IMR-90 (cell line): ENCODE measurements at regions of chr11 and their contacts with region 1.

Region 1: DNA sequence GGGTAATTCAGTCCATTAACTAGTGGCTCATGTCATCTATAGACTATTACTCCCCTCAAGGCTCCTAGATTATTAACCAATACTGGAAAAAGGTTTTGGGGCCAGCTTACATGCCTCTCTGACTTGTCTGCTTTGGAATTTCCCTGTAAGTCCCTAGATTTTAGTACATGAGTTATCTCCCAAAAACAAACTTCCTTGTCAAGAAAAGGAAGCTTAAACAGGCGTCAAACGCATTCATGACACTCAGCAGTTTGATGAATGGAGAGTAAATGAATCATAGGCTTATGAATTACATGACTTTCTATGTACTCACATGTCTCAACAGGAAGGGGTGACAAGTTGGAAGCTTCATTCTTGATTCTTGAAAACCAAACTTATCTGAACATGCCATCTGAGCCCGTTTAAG is 70.8 kb downstream of the BLID start:
- DNase-seq: peak; percentile 92
- ATAC-seq: peak; percentile 56
- H3K4me3 ChIP-seq: no peak overlapping the region
- H3K27ac ChIP-seq: peak overlapping the region; percentile 48; the same call in 1 of the 2 replicates
- H3K4me1 ChIP-seq: peaks cover 21% of the 10 kb centered on the region
- H3K27me3 ChIP-seq: no peaks in the 10 kb centered on the region
- CTCF ChIP-seq: no peak
- POLR2A ChIP-seq: no peak
- RAD21 ChIP-seq: no peak; the same call in 1 of the 2 replicates

Region 2: GRCh38 chr11:121762820-121763219 is 282.4 kb before region 1 on chr11:
- CTCF ChIA-PET with region 1: no interaction called
- POLR2A ChIA-PET with region 1: interaction called, 10 read pairs
- dilution Hi-C with region 1: no loop called
- in situ Hi-C with region 1: no loop called
- intact Hi-C with region 1: no loop called
- DNase-seq: peak; percentile 52
- ATAC-seq: peak; percentile 46
- H3K4me3 ChIP-seq: no peak overlapping the region
- H3K27ac ChIP-seq: no peak overlapping the region
- H3K4me1 ChIP-seq: peaks cover 6% of the 10 kb centered on the region; the same call in 1 of the 2 replicates
- H3K27me3 ChIP-seq: peaks cover 2% of the 10 kb centered on the region; the same call in 1 of the 2 replicates
- CTCF ChIP-seq: no peak
- POLR2A ChIP-seq: no peak
- RAD21 ChIP-seq: no peak

Region 3: GRCh38 chr11:122126024-122126688 is 81.0 kb after region 1 on chr11:
- CTCF ChIA-PET with region 1: no interaction called
- POLR2A ChIA-PET with region 1: no interaction called
- dilution Hi-C with region 1: no loop called
- in situ Hi-C with region 1: no loop called
- intact Hi-C with region 1: no loop called
- DNase-seq: no peak
- ATAC-seq: no peak
- H3K4me3 ChIP-seq: no peak overlapping the region
- H3K27ac ChIP-seq: peak overlapping the region; percentile 27; the same call in 1 of the 2 replicates
- H3K4me1 ChIP-seq: peaks cover 15% of the 10 kb centered on the region
- H3K27me3 ChIP-seq: no peaks in the 10 kb centered on the region
- CTCF ChIP-seq: no peak
- POLR2A ChIP-seq: no peak
- RAD21 ChIP-seq: no peak

Region 4: DNA sequence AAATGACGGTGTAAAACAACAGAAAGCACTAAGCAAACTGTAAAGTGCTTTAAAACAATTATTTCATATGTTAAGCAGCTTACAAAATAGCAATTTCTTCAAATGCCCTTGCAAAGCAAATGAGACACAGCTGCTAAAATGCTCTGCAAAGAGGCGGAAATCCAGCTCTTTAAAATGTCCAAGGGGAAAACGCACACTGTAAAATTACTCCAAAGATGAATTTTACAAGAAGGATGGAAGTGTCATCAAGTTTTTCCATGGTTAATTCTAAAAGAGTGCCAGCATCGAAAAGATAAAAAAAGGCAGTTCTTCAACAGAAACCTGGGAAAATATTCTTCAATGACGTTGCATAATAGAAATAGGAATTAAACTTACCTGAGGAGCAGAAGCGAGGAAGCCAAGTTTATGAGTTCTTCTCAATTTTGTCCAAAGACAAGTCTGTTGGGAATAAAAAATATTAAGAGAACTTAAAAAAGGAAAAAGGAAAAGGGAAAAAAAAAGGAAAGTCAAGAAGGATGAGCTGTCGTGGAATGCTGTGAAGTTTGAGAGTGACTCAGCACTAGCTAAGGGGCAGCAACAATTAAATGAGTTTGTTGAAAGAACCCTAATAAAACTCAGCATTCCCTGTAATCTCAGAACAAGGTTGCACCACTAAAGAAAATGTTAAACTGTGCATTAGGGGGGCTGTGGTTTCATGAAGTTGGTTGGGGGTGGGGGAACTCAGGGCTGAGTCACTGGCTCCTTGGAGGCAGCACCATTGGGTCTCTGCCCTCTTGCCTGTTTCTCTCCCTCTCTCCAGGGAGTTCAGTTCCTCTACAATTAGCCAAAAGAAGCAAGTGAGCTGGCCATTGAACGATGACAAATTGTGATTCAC is 135.0 kb after region 1 on chr11:
- CTCF ChIA-PET with region 1: no interaction called
- POLR2A ChIA-PET with region 1: no interaction called
- dilution Hi-C with region 1: no loop called
- in situ Hi-C with region 1: no loop called
- intact Hi-C with region 1: no loop called
- DNase-seq: peak; percentile 98
- ATAC-seq: peak; percentile 86
- H3K4me3 ChIP-seq: peak overlapping the region; percentile 61
- H3K27ac ChIP-seq: peak overlapping the region; percentile 93
- H3K4me1 ChIP-seq: peaks cover 15% of the 10 kb centered on the region
- H3K27me3 ChIP-seq: no peaks in the 10 kb centered on the region
- CTCF ChIP-seq: no peak
- POLR2A ChIP-seq: peak; percentile 77; the same call in 1 of the 2 replicates
- RAD21 ChIP-seq: no peak